ENCODE measurements at regions of chr3 and their contacts with region 1.

Region 1: GRCh38 chr3:129627429-129628168 is 21.1 kb upstream of the PLXND1 start:
- DNase-seq: peak; percentile 83 to 86
- H3K4me3 ChIP-seq: peak overlapping the region; percentile 85
- H3K4me3 Mint-ChIP-seq: peak overlapping the region; percentile 97
- H3K27ac Mint-ChIP-seq: peak overlapping the region; percentile 98
- H3K4me1 ChIP-seq: peaks cover 15% of the 10 kb centered on the region
- H3K4me1 Mint-ChIP-seq: peaks cover 11% of the 10 kb centered on the region
- H3K27me3 ChIP-seq: no peaks in the 10 kb centered on the region
- H3K27me3 Mint-ChIP-seq: no peaks in the 10 kb centered on the region
- CTCF ChIP-seq: peak; percentile 74 to 95

Region 2: DNA sequence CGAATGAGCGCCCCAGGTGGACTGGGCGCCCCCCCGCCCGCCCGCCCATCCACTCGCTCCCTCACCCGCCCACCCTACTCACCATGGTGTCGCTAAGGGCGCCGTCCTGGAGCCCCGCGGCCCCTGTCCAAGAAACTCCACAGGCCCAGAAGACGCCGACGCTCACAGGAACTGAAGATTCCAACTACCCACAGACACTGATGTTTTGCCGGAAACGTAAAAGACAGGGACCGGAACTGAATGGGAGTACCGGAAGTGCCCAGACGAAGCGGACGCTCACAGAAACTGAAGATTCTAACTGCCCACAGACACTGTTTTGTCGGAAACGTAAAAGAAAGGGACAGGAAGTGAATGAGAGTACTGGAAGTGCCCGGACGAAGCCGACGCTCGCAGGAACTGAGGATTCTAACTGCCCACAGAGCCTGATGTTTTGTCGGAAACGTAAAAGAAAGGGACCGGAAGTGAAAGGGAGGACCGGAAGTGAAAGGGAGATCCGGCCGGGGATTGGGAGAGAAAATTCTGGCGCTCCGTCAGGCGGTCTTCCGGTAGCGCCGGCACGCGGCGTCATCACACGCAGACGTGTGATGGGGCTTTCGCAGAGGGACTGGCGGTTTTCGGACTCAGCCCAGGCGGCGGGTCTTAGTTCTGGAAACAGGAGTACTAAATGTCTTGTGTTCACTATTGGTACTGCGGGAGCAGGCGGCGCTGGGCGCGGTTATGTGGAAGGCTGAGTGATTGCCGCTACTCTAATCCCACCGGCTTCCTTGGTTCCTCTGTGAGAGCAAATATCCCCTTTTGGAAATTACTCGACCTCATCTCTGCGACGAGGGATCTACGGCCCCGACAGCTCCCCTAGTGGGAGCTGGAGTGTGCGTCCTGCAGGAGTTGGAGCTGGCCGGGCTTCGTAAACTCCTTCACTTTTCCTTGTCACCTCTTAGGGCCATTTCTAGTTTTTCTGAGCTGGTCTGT is 466.4 kb before region 1 on chr3 and contains the start of gene ISY1:
- CTCF ChIA-PET with region 1: no interaction called
- POLR2A ChIA-PET with region 1: no interaction called
- intact Hi-C with region 1: no loop called
- DNase-seq: peak; percentile 90 to 91
- H3K4me3 ChIP-seq: peak within 1 kb of the TSS; percentile 59
- H3K4me3 Mint-ChIP-seq: peak within 1 kb of the TSS; percentile 89
- H3K27ac Mint-ChIP-seq: peak within 1 kb of the TSS; percentile 99
- H3K4me1 ChIP-seq: peaks cover 15% of the 10 kb centered on the region
- H3K4me1 Mint-ChIP-seq: peaks cover 12% of the 10 kb centered on the region
- H3K27me3 ChIP-seq: no peaks in the 10 kb centered on the region
- H3K27me3 Mint-ChIP-seq: no peaks in the 10 kb centered on the region
- CTCF ChIP-seq: peak; percentile 59 to 87
- total RNA-seq, gene ISY1: 35.6 and 37.6 TPM in 2 replicates

Region 3: GRCh38 chr3:129490242-129491045 is 137.2 kb before region 1 on chr3:
- CTCF ChIA-PET with region 1: interaction called, 38 read pairs
- POLR2A ChIA-PET with region 1: interaction called, 7 read pairs
- intact Hi-C with region 1: loop called (anchors 1 kb)
- DNase-seq: peak; percentile 76 to 77
- H3K4me3 ChIP-seq: no peak overlapping the region
- H3K4me3 Mint-ChIP-seq: no peak overlapping the region
- H3K27ac Mint-ChIP-seq: peak overlapping the region; percentile 59
- H3K4me1 ChIP-seq: peaks cover 3% of the 10 kb centered on the region
- H3K4me1 Mint-ChIP-seq: peaks cover 17% of the 10 kb centered on the region
- H3K27me3 ChIP-seq: no peaks in the 10 kb centered on the region
- H3K27me3 Mint-ChIP-seq: no peaks in the 10 kb centered on the region
- CTCF ChIP-seq: peak; percentile 65 to 83

Region 4: DNA sequence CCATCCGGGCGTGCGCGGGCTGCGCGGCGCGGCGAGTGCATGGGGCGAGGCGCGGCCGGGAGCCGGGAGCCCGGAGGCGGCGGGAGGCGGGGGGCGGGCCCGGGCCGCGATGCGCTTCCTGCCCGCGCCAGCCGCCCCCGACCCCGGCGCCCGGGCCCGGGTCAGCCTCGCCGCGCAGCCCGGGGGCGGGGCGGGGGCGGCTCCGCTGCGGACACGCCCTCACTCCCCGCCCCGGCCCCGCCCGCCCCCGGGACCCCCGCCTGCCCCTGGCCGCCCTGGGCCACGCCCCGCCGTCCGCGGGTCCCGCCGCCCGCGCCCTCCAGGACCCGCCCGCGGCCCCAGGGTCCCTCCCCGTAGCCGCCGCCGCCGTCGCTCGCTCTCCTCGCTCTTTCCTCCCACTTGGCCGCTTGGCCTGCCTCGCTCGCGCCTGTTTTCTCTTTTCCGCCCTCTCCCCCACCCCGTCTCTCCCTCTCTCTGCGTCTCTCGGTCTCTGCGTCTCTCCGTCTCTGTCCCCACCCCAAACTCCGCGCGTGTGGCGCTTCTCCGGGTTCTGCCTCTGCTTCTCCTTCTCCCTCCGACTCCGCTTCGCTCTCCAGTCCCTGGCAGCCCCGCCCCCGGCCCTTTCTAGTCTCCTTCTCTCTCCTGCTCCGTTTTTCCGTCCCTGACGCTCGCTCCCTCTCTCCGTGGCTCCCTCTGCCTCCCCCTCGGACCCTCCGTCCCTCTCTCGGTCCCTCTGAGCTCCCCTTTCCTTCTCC is 20.8 kb before region 1 on chr3 and contains the start of gene PLXND1:
- CTCF ChIA-PET with region 1: interaction called, 6 read pairs
- POLR2A ChIA-PET with region 1: interaction called, 6 read pairs
- intact Hi-C with region 1: loop called (anchors 1 kb)
- DNase-seq: peak; percentile 58 to 75
- H3K4me3 ChIP-seq: peak within 1 kb of the TSS; percentile 77
- H3K4me3 Mint-ChIP-seq: peak within 1 kb of the TSS; percentile 96
- H3K27ac Mint-ChIP-seq: peak within 1 kb of the TSS; percentile 47
- H3K4me1 ChIP-seq: peaks cover 22% of the 10 kb centered on the region
- H3K4me1 Mint-ChIP-seq: peaks cover 18% of the 10 kb centered on the region
- H3K27me3 ChIP-seq: no peaks in the 10 kb centered on the region
- H3K27me3 Mint-ChIP-seq: no peaks in the 10 kb centered on the region
- CTCF ChIP-seq: no peak
- total RNA-seq, gene PLXND1: 26.3 and 33.0 TPM in 2 replicates

Region 5: GRCh38 chr3:129650256-129650872 is 22.8 kb after region 1 on chr3:
- CTCF ChIA-PET with region 1: interaction called, 3 read pairs
- POLR2A ChIA-PET with region 1: no interaction called
- intact Hi-C with region 1: loop called (anchors 1 kb)
- DNase-seq: peak; percentile 74 to 77
- H3K4me3 ChIP-seq: no peak overlapping the region
- H3K4me3 Mint-ChIP-seq: peak overlapping the region; percentile 29
- H3K27ac Mint-ChIP-seq: peak overlapping the region; percentile 33
- H3K4me1 ChIP-seq: peaks cover 27% of the 10 kb centered on the region
- H3K4me1 Mint-ChIP-seq: peaks cover 18% of the 10 kb centered on the region
- H3K27me3 ChIP-seq: no peaks in the 10 kb centered on the region
- H3K27me3 Mint-ChIP-seq: no peaks in the 10 kb centered on the region
- CTCF ChIP-seq: peak; percentile 67 to 68

Region 6: GRCh38 chr3:129824926-129825541 is 197.4 kb after region 1 on chr3:
- CTCF ChIA-PET with region 1: interaction called, 9 read pairs
- POLR2A ChIA-PET with region 1: no interaction called
- intact Hi-C with region 1: loop called (anchors 1 kb)
- DNase-seq: peak; percentile 47 to 72
- H3K4me3 ChIP-seq: no peak overlapping the region
- H3K4me3 Mint-ChIP-seq: no peak overlapping the region
- H3K27ac Mint-ChIP-seq: no peak overlapping the region
- H3K4me1 ChIP-seq: peaks cover 12% of the 10 kb centered on the region; the same call in 1 of the 2 replicates
- H3K4me1 Mint-ChIP-seq: peaks cover 14% of the 10 kb centered on the region
- H3K27me3 ChIP-seq: no peaks in the 10 kb centered on the region
- H3K27me3 Mint-ChIP-seq: no peaks in the 10 kb centered on the region
- CTCF ChIP-seq: peak; percentile 58 to 77

Region 7: GRCh38 chr3:129893581-129894070 is 266.0 kb after region 1 on chr3 and contains the start of gene TMCC1:
- CTCF ChIA-PET with region 1: no interaction called
- POLR2A ChIA-PET with region 1: no interaction called
- intact Hi-C with region 1: loop called (anchors 1 kb)
- DNase-seq: peak; percentile 94
- H3K4me3 ChIP-seq: peak within 1 kb of the TSS; percentile 97
- H3K4me3 Mint-ChIP-seq: peak within 1 kb of the TSS; percentile 92
- H3K27ac Mint-ChIP-seq: peak within 1 kb of the TSS; percentile 88
- H3K4me1 ChIP-seq: peaks cover 14% of the 10 kb centered on the region
- H3K4me1 Mint-ChIP-seq: peaks cover 14% of the 10 kb centered on the region
- H3K27me3 ChIP-seq: no peaks in the 10 kb centered on the region
- H3K27me3 Mint-ChIP-seq: no peaks in the 10 kb centered on the region
- CTCF ChIP-seq: no peak
- total RNA-seq, gene TMCC1: 26.0 and 27.8 TPM in 2 replicates

Region 8: DNA sequence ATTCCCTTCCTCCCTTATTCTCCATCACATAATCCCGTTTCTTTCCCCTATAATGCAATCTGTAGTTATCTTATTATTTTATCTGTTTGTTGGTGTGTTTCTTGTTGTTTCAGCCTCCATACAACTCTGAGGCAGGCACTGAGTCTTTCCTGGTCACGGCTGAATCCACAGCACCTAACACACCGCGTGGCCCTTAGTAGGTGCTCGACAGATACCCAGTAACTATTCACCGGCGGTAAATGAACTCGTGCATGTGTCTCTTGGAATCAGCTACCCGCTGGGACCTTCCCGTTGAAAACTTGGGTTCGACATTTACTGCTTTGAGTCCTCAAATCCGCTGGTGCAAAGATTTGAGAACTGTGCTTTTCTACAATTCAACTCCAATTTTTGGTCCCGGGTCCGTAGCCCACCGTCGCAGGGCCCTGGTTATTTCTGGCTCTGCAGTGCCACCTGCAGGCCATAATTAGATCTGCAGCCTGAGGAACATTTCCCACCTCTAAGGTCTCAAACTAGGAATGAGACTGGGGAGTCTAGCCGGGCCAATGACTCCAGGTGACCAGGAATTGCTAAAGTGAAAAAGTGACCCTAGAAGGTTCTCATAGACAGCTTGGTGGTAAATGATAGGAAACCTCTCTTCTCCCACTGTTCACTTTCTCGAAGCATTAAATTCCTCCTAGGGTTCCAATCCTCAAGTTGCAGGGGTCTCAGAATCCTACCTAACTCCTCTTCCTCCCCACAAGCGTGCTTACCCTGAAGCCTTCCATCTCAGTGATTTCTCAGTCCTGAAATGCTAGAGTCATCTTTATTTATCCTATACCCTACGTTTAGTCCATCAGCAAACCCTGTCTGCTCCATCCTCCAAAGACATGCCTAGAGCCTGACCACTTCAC is 306.9 kb after region 1 on chr3:
- CTCF ChIA-PET with region 1: no interaction called
- POLR2A ChIA-PET with region 1: no interaction called
- intact Hi-C with region 1: loop called (anchors 1 kb)
- DNase-seq: peak in 1 of 2 experiments; percentile 42
- H3K4me3 ChIP-seq: no peak overlapping the region
- H3K4me3 Mint-ChIP-seq: no peak overlapping the region
- H3K27ac Mint-ChIP-seq: no peak overlapping the region
- H3K4me1 ChIP-seq: no peaks in the 10 kb centered on the region
- H3K4me1 Mint-ChIP-seq: no peaks in the 10 kb centered on the region
- H3K27me3 ChIP-seq: no peaks in the 10 kb centered on the region
- H3K27me3 Mint-ChIP-seq: no peaks in the 10 kb centered on the region
- CTCF ChIP-seq: peak; percentile 78 to 91

Measured in Caco-2 (cell line).